ENCODE measurements at regions of chr2 and their contacts with region 1.

Region 1: DNA sequence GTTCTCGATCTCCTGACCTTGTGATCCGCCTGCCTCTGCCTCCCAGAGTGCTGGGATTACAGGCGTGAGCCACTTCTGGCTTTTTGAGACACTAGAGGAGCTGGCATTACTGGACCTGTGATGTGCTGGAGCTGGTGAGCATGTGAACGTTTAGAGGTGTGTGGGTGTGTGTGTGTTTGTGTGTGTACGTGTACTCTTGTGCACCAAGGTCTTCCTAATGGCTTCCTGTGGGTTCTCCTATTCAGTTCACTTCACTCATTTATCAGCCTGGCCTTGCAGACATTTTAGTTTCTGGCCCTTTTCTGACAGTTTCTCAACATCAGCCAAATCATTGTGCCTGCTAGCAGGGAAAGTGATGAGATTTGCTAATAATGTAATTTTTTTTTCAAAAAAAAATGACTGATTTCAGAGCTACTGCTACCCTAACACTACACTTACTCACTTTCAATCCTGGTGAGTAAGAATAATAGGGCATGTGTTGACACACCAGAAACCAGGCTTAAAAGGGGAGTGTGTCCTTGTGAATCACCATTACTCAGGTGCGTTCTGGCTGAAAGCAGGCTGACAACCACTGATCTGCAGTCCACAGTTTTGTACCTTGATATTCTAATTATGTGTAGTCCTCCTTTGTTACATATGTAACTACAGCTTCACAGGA is 41.0 kb upstream of the ACTR3 start:
- DNase-seq: peak; percentile 83
- H3K4me3 Mint-ChIP-seq: no peak overlapping the region
- H3K27ac Mint-ChIP-seq: peak overlapping the region; percentile 29
- H3K4me1 Mint-ChIP-seq: peaks cover 12% of the 10 kb centered on the region
- H3K27me3 Mint-ChIP-seq: no peaks in the 10 kb centered on the region
- CTCF ChIP-seq: no peak

Region 2: GRCh38 chr2:113876503-113877387 is 27.9 kb after region 1 on chr2:
- CTCF ChIA-PET with region 1: interaction called, 5 read pairs
- POLR2A ChIA-PET with region 1: interaction called, 12 read pairs
- intact Hi-C with region 1: no loop called
- DNase-seq: peak; percentile 84
- H3K4me3 Mint-ChIP-seq: no peak overlapping the region
- H3K27ac Mint-ChIP-seq: no peak overlapping the region
- H3K4me1 Mint-ChIP-seq: peaks cover 19% of the 10 kb centered on the region
- H3K27me3 Mint-ChIP-seq: no peaks in the 10 kb centered on the region
- CTCF ChIP-seq: no peak